Activated naive CD4-positive, alpha-beta T cell treated with anti-CD3 and anti-CD28 coated beads for 36 hours (primary cell): ENCODE measurements at regions of chr5 and their contacts with region 1.

Region 1: GRCh38 chr5:35089334-35090314 is 41.9 kb upstream of the AGXT2 start:
- DNase-seq: peak; percentile 79
- H3K4me3 Mint-ChIP-seq: no peak overlapping the region
- H3K27ac Mint-ChIP-seq: no peak overlapping the region
- H3K4me1 Mint-ChIP-seq: no peaks in the 10 kb centered on the region
- H3K27me3 Mint-ChIP-seq: peaks cover 4% of the 10 kb centered on the region

Region 2: DNA sequence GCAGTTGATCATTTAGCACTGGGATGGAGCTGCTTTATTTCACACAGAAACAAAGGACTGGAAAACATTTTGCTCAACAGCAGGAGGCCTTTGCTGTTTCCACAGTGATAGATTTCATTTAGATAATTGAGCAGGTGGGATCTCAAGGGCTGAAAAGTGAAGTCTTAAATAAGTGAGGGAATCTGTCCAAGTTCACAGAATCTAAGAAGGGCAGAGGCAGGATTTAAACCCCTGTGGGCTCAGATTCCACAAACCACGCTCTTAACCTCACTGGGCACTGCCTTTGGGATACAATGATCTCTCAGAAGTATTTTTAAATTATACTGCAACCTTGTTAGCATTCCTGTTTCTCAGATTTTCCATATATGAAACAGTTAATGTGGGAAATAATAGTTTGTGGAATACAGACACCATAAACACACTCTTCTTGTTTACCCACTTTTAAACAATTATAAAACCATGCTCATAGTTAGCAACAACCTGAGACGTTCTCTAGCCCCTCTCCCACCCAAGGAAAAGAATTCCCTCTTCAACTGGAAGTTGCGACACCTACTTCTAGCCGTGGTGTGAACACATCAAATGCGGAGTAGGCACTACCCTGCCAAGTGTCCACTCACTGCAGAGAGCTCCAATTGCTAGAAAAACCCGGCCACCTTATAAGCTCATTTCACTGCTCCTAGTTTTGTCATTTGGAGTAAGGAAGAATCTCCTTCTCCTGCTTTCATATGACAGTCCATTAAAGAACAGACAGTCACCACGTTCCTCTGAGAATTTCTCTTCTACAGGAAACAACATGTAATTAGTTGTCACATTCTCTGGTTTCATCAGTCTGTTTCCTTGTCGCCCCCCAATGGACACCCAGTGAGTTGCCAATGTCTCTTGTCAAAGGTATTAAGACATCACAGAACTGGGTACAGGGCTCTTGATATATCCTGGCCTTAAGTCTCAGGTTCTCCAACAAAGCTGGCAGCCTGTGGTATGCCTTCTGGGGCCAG is 93.2 kb after region 1 on chr5:
- CTCF ChIA-PET with region 1: interaction called, 8 read pairs
- intact Hi-C with region 1: loop called (anchors 1 kb)
- DNase-seq: peak; percentile 68
- H3K4me3 Mint-ChIP-seq: no peak overlapping the region
- H3K27ac Mint-ChIP-seq: no peak overlapping the region
- H3K4me1 Mint-ChIP-seq: no peaks in the 10 kb centered on the region
- H3K27me3 Mint-ChIP-seq: peaks cover 10% of the 10 kb centered on the region

Region 3: GRCh38 chr5:35202319-35203111 is 112.9 kb after region 1 on chr5:
- CTCF ChIA-PET with region 1: interaction called, 5 read pairs
- intact Hi-C with region 1: loop called (anchors 1 kb)
- DNase-seq: peak; percentile 67
- H3K4me3 Mint-ChIP-seq: no peak overlapping the region
- H3K27ac Mint-ChIP-seq: no peak overlapping the region
- H3K4me1 Mint-ChIP-seq: no peaks in the 10 kb centered on the region
- H3K27me3 Mint-ChIP-seq: peaks cover 25% of the 10 kb centered on the region

Region 4: DNA sequence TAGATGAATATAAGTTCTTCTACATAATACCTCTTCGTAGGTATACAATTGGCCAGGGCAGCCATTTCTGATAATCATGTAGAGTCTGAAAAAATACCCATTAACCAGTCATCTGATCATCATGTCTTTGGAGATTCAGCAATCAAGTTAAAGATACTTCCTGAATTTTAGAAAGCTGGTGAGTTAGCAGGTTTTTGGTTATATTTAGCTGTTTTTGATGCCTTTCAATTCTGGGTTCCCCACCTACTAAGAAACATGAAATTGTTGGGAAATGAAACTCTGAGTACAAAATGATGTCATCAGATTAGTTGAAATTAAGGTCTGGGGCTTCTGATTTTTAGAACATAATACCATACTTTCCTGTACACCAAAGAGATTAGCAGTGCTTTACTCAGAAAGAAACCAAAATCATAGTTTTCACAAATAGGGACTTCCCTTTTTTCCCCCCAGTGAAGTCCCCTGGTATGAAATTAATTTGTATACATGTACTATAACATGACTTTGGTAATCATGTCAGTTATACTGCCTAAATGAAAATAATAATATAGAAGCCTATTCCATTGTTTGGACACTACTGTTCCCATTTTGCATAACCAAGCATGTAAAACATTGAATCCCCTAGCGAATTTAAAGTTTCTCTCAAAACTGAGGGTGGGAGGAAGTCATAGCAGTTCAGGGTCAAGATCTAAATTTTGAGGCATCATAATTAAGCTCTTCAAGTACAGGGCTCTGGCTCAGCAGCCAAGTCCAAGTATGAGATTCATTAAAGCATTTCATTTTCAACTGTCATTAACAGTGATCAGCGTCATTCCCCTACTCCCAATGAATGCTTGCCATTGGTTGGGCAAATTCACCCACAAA is 122.7 kb after region 1 on chr5:
- CTCF ChIA-PET with region 1: interaction called, 3 read pairs
- intact Hi-C with region 1: loop called (anchors 1 kb)
- DNase-seq: no peak
- H3K4me3 Mint-ChIP-seq: no peak overlapping the region
- H3K27ac Mint-ChIP-seq: no peak overlapping the region
- H3K4me1 Mint-ChIP-seq: peaks cover 8% of the 10 kb centered on the region
- H3K27me3 Mint-ChIP-seq: peaks cover 9% of the 10 kb centered on the region

Region 5: DNA sequence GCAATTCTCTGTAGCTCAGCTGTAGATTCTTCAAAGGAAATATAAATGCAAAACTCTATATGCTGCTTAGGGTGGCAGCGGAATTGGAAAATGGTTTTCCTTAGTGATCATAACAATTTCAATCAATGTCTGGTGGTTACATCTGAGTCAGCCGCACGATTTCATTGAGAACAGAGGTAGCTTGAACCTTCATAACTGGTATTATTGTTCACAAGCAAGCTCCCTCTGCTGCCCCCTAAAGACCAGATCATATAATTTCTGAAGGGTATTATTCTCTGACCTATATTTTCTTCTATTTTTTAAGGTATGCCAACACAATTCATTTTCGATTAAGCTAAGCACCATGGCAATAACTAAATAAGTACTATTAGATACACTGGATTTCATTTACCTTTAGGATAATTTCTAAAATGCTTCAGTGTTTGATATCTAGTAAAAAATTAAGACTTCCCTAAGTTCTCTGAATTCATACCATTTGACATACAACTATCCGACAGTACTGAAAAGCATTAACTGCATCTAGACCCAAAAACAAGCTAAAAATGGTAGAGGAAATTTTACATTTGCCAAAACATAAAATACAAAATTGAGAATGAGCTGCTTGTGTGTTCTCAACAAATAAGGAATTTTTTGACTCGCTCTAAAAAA is 346.9 kb after region 1 on chr5:
- CTCF ChIA-PET with region 1: no interaction called
- intact Hi-C with region 1: loop called (anchors 1 kb)
- DNase-seq: peak; percentile 7
- H3K4me3 Mint-ChIP-seq: no peak overlapping the region
- H3K27ac Mint-ChIP-seq: no peak overlapping the region
- H3K4me1 Mint-ChIP-seq: no peaks in the 10 kb centered on the region
- H3K27me3 Mint-ChIP-seq: peaks cover 44% of the 10 kb centered on the region

Region 6: DNA sequence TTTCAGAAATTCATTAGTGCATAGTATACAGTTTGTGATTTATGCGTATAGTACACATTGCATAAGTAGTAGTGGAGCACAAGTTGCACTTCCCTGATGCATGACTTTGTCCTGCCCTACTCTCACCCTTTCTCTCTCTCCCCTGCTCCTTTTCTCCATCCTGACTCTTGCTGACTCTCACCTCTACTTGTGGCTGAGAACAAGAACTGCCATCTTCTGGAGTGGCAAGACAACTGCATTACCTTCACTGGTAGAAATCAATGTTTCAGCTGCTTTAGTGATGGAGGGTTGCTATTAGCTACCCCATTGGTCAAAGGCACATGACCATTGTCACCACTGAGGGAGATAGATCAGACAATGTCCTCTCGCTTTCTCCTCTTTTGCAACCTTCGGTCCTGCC is 554.9 kb after region 1 on chr5:
- CTCF ChIA-PET with region 1: no interaction called
- intact Hi-C with region 1: loop called (anchors 5 kb)
- DNase-seq: no peak
- H3K4me3 Mint-ChIP-seq: no peak overlapping the region
- H3K27ac Mint-ChIP-seq: no peak overlapping the region
- H3K4me1 Mint-ChIP-seq: no peaks in the 10 kb centered on the region
- H3K27me3 Mint-ChIP-seq: no peaks in the 10 kb centered on the region

Region 7: DNA sequence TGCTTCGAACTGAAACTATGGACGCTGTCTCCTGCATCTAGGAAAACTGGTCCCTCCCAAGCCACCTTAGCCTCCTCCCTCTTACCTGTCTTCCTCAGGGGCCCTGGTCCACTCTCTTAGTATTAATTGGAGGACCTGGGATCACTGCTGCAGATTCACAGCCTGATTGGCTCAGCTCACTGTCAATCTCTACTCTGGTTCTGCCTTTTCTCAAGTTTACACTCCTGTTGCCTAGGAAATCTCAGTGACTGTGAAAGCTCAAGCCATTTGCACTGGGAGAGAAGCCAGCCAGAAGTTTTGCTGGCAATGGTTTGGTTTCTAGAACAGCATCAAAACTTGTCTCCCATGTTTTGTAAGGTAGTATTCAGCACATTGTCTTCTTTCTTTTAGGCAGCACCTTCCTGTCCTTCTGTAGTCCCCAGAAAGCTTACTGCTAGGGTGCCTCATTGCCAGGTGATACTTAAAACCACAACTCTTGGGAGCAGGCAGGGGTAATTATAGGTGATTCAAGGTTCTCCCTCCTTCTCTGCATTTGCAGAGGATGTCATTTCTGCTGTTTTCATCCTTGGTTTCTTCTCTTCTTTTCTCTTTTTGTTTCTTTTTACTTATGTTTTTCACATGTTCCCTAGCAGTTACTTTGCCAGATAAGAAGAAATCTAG is 849.1 kb after region 1 on chr5 and contains the start of gene CAPSL:
- CTCF ChIA-PET with region 1: interaction called, 3 read pairs
- intact Hi-C with region 1: loop called (anchors 1 kb)
- DNase-seq: peak; percentile 29
- H3K4me3 Mint-ChIP-seq: no peak within 1 kb of the TSS
- H3K27ac Mint-ChIP-seq: no peak within 1 kb of the TSS
- H3K4me1 Mint-ChIP-seq: no peaks in the 10 kb centered on the region
- H3K27me3 Mint-ChIP-seq: peaks cover 6% of the 10 kb centered on the region
- total RNA-seq, gene CAPSL: 1.8 TPM